GM12878 (cell line): ENCODE measurements at regions of chr19 and their contacts with region 1.

Region 1: DNA sequence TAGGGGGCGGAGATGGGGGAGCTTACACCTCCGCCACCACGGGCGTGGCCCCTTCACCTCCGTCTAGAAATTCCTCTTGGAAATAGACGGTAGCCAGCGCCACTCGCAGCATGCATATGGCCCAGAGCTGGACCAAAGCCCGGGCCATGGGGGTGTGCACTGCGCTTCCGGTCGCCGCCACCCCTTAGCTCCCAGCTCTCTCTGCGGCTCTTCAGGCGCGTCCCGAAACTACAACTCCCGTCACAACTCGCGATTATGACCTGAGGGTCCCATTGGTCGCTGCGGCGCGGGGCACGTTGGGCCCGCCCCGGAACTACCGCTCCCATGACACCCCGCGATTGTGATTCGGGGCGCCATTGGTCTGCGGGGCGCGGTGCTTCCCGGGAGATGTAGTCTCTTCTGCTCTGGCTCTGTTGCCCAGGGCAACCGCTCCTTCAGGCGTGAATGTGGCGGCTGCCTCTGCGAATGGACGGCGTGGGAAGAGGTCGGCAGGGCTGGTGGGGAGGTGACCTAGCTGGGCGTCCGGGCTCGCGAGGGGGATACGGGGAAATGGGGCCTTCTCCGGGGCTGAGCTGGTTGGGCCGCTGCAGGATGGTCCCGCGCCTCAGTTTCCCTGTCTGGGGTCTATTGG is at the starts of genes C19orf44 and CALR3:
- DNase-seq: peak; percentile 93
- ATAC-seq: peak; percentile 100
- H3K4me3 ChIP-seq: peak within 1 kb of the TSS; percentile 80
- H3K27ac ChIP-seq: 0 out of 2 replicates have a peak within 1 kb of the TSS, but pooled peaks have one; percentile 28
- H3K4me1 ChIP-seq: peaks cover 3% of the 10 kb centered on the region; the same call in 1 of the 2 replicates
- H3K27me3 ChIP-seq: no peaks in the 10 kb centered on the region
- CTCF ChIP-seq: no peak
- EP300 ChIP-seq: no peak
- POLR2A ChIP-seq: peak; percentile 88
- RAD21 ChIP-seq: 0 out of 2 replicates have a peak, but pooled peaks have one; percentile 3
- polyA plus RNA-seq, gene C19orf44: 0.26 to 0.31 TPM
- polyA plus RNA-seq, gene CALR3: 0.10 to 0.13 TPM

Region 2: GRCh38 chr19:16446724-16447368 is 49.3 kb before region 1 on chr19:
- CTCF ChIA-PET with region 1: interaction called, 8 read pairs
- POLR2A ChIA-PET with region 1: interaction called, 4 read pairs
- RAD21 ChIA-PET with region 1: interaction called, 6 read pairs
- SMC1A ChIA-PET with region 1: no interaction called
- in situ Hi-C with region 1: no loop called
- intact Hi-C with region 1: loop called (anchors 2 kb)
- DNase-seq: peak; percentile 70
- ATAC-seq: peak; percentile 71
- H3K4me3 ChIP-seq: peak overlapping the region; percentile 12; the same call in 1 of the 2 replicates
- H3K27ac ChIP-seq: peak overlapping the region; percentile 99
- H3K4me1 ChIP-seq: peaks cover 86% of the 10 kb centered on the region
- H3K27me3 ChIP-seq: no peaks in the 10 kb centered on the region
- CTCF ChIP-seq: no peak
- EP300 ChIP-seq: peak in 1 of 2 experiments; percentile 83; a peak in 2 of 4 replicates
- POLR2A ChIP-seq: peak; percentile 53
- RAD21 ChIP-seq: no peak

Region 3: GRCh38 chr19:16482736-16483135 is 13.4 kb before region 1 on chr19:
- CTCF ChIA-PET with region 1: no interaction called
- POLR2A ChIA-PET with region 1: interaction called, 8 read pairs
- RAD21 ChIA-PET with region 1: no interaction called
- SMC1A ChIA-PET with region 1: interaction called, 11 read pairs
- in situ Hi-C with region 1: no loop called
- intact Hi-C with region 1: no loop called
- DNase-seq: no peak
- ATAC-seq: no peak
- H3K4me3 ChIP-seq: no peak overlapping the region
- H3K27ac ChIP-seq: no peak overlapping the region
- H3K4me1 ChIP-seq: no peaks in the 10 kb centered on the region
- H3K27me3 ChIP-seq: no peaks in the 10 kb centered on the region
- CTCF ChIP-seq: no peak
- EP300 ChIP-seq: no peak
- POLR2A ChIP-seq: no peak
- RAD21 ChIP-seq: no peak